AG04450 (cell line): ENCODE measurements at regions of chr13 and their contacts with region 1.

Region 1: GRCh38 chr13:39483326-39483725 is 119.7 kb downstream of the LHFPL6 start:
- DNase-seq: no peak
- H3K4me3 ChIP-seq: no peak overlapping the region
- H3K27ac ChIP-seq: no peak overlapping the region
- H3K27me3 ChIP-seq: no peaks in the 10 kb centered on the region
- CTCF ChIP-seq: no peak

Region 2: DNA sequence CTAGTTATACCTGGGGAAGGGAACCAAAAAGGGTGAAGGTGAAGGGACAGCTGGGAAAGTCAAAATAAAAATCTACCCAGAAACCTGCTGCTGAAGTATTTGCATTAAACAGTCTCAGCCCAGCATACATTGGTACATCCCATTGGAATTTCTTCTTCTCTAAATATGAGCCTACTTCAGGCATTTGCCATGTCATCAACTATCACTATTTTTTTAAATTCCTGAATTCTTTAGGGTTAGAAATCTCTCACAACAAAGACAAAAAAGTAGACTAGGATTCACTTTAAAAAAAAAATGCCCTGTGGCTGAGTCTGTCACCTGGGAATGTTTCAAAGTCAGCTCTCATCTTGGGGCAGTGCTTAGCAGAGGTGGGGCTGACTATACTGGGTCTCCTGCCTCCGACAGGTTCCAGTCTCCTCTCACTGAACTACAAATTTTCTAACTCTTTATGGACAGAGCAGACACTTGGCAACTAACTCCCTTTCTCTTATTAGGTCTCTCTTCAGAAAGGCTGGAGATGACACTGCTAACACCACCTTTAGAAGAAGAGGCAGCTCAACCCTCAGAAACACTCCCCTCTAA is 21.6 kb before region 1 on chr13:
- CTCF ChIA-PET with region 1: no interaction called
- POLR2A ChIA-PET with region 1: interaction called, 13 read pairs
- DNase-seq: no peak
- H3K4me3 ChIP-seq: no peak overlapping the region
- H3K27ac ChIP-seq: peak overlapping the region; percentile 74
- H3K27me3 ChIP-seq: no peaks in the 10 kb centered on the region
- CTCF ChIP-seq: no peak